ENCODE measurements at regions of chr1 and their contacts with region 1.

Region 1: GRCh38 chr1:201511941-201512539 is 5.1 kb upstream of the CSRP1 start:
- DNase-seq: no peak
- H3K4me3 ChIP-seq: no peak overlapping the region
- H3K27ac ChIP-seq: peak overlapping the region; percentile 54 to 87 (median 72)
- H3K4me1 ChIP-seq: peaks cover 16 to 45% (median 23%) of the 10 kb centered on the region in 3 donors
- H3K27me3 ChIP-seq: no peaks in the 10 kb centered on the region
- CTCF ChIP-seq: no peak
- POLR2A ChIP-seq: no peak

Region 2: GRCh38 chr1:201447911-201448871 is 63.8 kb before region 1 on chr1:
- intact Hi-C with region 1: loop called (anchors 10 kb)
- DNase-seq: no peak
- H3K4me3 ChIP-seq: no peak overlapping the region
- H3K27ac ChIP-seq: peak overlapping the region in 2 of 4 donors; percentile 16 to 18
- H3K4me1 ChIP-seq: peaks cover 0 to 41% (median 18%) of the 10 kb centered on the region in 3 donors
- H3K27me3 ChIP-seq: no peaks in the 10 kb centered on the region
- CTCF ChIP-seq: peak; percentile 59 to 94 (median 88)
- POLR2A ChIP-seq: no peak

Region 3: DNA sequence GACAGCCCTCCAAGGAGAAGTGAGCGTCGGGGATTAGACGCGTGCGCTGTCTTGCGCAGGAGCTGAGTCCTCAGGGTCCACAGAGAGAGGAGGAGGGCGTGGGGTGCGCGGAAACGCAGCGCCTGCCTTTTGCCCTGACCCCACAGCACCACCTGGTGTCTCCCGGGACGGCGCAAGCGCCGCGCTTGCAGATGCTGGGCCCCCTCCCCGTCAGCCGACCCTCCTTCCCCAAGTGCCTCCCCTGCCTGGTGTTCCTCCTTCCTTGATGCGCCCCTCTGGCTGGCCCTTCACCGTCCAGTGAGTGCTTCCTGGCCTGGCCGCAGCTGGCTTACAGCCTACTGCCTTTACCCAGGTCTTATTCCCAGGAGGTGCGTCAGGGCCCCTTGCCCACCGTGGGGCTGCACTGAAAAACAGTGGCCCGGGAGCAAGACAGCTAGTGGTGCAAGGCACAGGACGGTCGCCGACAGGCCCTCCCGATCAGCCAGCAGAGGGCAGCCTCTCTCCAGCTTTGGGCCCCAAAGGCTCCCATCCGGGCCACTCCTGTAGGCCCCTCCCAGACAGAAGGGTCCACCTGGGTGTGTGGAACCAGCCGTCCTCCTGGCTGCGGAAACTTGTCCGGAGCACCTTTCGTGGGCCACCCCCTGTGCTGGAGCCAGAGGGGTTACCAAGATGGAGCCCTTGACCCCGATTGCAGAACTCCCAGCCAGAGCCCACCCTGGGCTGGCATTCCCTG is 30.1 kb before region 1 on chr1:
- intact Hi-C with region 1: loop called (anchors 2 kb)
- DNase-seq: no peak
- H3K4me3 ChIP-seq: peak overlapping the region; percentile 12 to 46 (median 38)
- H3K27ac ChIP-seq: peak overlapping the region; percentile 83 to 93 (median 91)
- H3K4me1 ChIP-seq: peaks cover 22 to 85% (median 36%) of the 10 kb centered on the region in 3 donors
- H3K27me3 ChIP-seq: no peaks in the 10 kb centered on the region
- CTCF ChIP-seq: peak; percentile 90 to 97 (median 92)
- POLR2A ChIP-seq: no peak

Measured in esophagus squamous epithelium (tissue), 5 donors.